Common myeloid progenitor, CD34-positive (primary cell): ENCODE measurements at regions of chr1 and their contacts with region 1.

Region 1: DNA sequence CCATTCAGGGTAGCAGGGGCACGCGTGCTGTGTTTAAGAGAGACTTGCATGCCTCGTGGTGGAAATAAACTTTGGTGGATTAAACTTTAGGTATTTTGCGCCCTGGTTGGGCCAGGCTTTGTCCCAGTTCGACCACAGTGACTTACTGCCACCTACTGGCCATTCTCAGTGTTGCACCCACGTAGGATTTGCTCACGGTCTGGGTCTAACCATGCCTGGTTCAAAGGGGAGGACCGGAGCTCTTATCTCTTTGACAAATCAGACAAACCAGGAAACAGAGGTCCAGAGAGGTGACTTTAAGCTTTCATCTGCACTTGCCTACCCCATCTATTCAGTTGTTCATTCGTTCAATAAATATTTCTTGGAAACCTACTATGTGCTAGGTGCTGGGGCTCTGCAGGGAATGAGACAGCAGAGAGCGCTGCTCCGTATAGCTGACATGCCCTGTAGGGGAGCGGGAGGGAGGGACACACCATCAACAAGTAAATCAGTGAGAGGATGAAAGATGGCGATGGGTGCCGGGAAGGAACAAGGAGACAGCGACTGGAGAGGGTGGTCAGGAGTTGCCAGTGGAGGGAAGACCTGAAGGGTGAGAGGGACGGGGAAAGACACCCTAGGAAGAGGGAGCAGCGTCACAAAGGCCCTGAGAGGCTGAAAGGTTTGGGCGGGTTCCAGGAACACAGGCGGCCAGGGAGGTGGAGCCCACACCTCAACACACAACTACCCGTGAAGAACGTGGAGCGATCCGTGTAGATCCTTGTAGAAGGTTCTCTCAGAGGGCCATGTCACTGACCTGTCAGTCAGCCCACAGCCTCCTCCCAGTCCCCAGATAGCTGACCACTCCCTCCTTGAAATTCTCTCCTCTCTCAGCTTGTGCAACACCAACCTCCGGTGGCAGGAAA is 27.2 kb upstream of the TINAGL1 start:
- DNase-seq: peak; percentile 89 to 95 (median 93)
- H3K4me3 ChIP-seq: peak overlapping the region in 5 of 7 experiments; percentile 5 to 63 (median 20)
- H3K27ac ChIP-seq: no peak overlapping the region
- H3K4me1 ChIP-seq: peaks cover 0 to 15% (median 11%) of the 10 kb centered on the region in 4 experiments
- H3K27me3 ChIP-seq: no peaks in the 10 kb centered on the region

Region 2: DNA sequence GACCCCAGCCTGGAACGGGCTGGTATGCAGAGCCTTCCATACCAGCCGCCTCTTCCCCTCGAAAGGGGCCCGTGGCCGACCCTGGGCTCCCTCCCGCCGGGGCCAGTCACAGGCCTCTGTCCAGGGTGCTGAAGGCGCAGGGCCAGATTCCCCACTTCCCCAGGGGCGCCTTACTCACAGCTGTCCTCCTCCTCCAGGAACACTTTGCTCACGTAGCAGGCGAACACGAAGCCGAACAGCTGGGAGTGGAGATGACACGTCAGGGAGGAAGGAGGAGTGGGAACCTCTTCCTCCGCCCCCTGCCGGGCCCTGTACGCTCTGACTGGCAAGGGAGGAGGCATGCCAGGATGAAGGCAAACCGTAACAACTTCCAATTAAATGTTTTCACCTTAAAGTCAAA is 366.8 kb before region 1 on chr1:
- CTCF ChIA-PET with region 1: interaction called, 11 read pairs
- POLR2A ChIA-PET with region 1: no interaction called
- DNase-seq: peak; percentile 67 to 75 (median 73)
- H3K4me3 ChIP-seq: peak overlapping the region in 3 of 7 experiments; percentile 48 to 68 (median 62)
- H3K27ac ChIP-seq: no peak overlapping the region
- H3K4me1 ChIP-seq: peaks cover 0 to 14% (median 12%) of the 10 kb centered on the region in 4 experiments
- H3K27me3 ChIP-seq: peaks cover 0 to 15% (median 8%) of the 10 kb centered on the region in 5 experiments

Region 3: GRCh38 chr1:31394628-31395193 is 154.4 kb before region 1 on chr1:
- CTCF ChIA-PET with region 1: interaction called, 22 read pairs
- POLR2A ChIA-PET with region 1: no interaction called
- DNase-seq: peak; percentile 75 to 82 (median 80)
- H3K4me3 ChIP-seq: peak overlapping the region; percentile 23 to 82 (median 58)
- H3K27ac ChIP-seq: no peak overlapping the region
- H3K4me1 ChIP-seq: peaks cover 4 to 22% (median 11%) of the 10 kb centered on the region in 4 experiments
- H3K27me3 ChIP-seq: no peaks in the 10 kb centered on the region

Region 4: GRCh38 chr1:31422505-31423319 is 126.4 kb before region 1 on chr1:
- CTCF ChIA-PET with region 1: interaction called, 81 read pairs
- POLR2A ChIA-PET with region 1: interaction called, 3 read pairs
- DNase-seq: peak; percentile 61 to 80 (median 75)
- H3K4me3 ChIP-seq: no peak overlapping the region
- H3K27ac ChIP-seq: no peak overlapping the region
- H3K4me1 ChIP-seq: peaks cover 0 to 13% (median 10%) of the 10 kb centered on the region in 4 experiments
- H3K27me3 ChIP-seq: no peaks in the 10 kb centered on the region

Region 5: DNA sequence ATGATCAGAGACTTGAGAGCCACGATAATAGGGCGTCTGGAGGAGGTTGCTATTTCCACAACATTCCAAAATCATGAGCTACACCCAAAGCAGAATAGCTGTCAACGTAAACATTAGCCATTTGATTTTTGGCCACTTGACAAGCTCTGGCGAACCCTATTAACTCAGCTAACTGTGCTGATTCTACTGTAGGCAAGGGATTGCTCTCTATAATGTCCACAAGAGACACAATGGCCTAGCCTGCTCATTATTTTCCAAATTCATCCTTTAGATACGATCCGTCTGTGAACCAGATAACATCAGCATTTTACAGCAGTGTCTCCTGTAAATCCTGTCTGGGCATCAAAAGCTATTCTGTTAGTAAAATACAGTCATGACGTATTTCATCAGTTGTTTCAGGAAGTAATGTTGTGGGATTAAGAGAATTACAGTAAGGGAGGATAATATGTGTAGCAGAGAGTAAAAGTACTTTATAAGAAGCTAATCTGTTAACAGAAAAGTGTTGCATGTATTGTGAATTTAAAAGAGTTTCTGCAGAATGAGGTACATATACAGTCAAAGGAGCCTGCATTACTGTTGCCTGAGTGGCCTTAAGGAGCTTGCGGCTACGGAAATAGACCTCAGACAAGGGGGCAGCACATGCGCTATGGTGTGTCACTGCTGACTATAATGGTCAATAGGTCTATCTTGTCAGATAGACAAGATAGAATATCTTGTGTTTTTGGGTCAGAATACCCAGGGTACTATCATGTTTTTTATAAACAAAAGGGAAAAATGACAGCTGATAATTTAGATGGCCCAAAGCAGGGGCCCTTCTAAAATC is 17.8 kb before region 1 on chr1:
- CTCF ChIA-PET with region 1: interaction called, 21 read pairs
- POLR2A ChIA-PET with region 1: no interaction called
- DNase-seq: no peak
- H3K4me3 ChIP-seq: no peak overlapping the region
- H3K27ac ChIP-seq: no peak overlapping the region
- H3K4me1 ChIP-seq: peaks cover 0 to 21% (median 16%) of the 10 kb centered on the region in 4 experiments
- H3K27me3 ChIP-seq: no peaks in the 10 kb centered on the region

Region 6: GRCh38 chr1:31564134-31564989 is 15.2 kb after region 1 on chr1:
- CTCF ChIA-PET with region 1: interaction called, 15 read pairs
- POLR2A ChIA-PET with region 1: interaction called, 4 read pairs
- DNase-seq: peak; percentile 50 to 78 (median 66)
- H3K4me3 ChIP-seq: no peak overlapping the region
- H3K27ac ChIP-seq: no peak overlapping the region
- H3K4me1 ChIP-seq: no peaks in the 10 kb centered on the region
- H3K27me3 ChIP-seq: no peaks in the 10 kb centered on the region